ENCODE measurements at regions of chr16 and their contacts with region 1.

Region 1: GRCh38 chr16:22624038-22624799 is 113.5 kb downstream of the NPIPB5 start:
- DNase-seq: no peak
- CTCF ChIP-seq: no peak

Region 2: GRCh38 chr16:22641131-22641628 is 17.0 kb after region 1 on chr16:
- CTCF ChIA-PET with region 1: interaction called, 13 read pairs
- POLR2A ChIA-PET with region 1: no interaction called
- DNase-seq: no peak
- CTCF ChIP-seq: no peak

Measured in GM10248 (cell line).